Transverse colon (tissue), 4 donors: ENCODE measurements at regions of chr11 and their contacts with region 1.

Region 1: GRCh38 chr11:88174709-88175568 is at the start of gene RAB38:
- DNase-seq: peak; percentile 74
- H3K4me3 ChIP-seq: peak within 1 kb of the TSS; percentile 11 to 58 (median 36)
- H3K27ac ChIP-seq: peak within 1 kb of the TSS; percentile 17 to 73 (median 59)
- H3K4me1 ChIP-seq: peaks cover 0 to 21% (median 9%) of the 10 kb centered on the region in 4 donors
- H3K27me3 ChIP-seq: no peaks in the 10 kb centered on the region
- CTCF ChIP-seq: no peak
- EP300 ChIP-seq: no peak
- POLR2A ChIP-seq: no peak
- total RNA-seq, gene RAB38: 0.80 to 3.7 (median 1.6) TPM in 3 of 4 donors, not detected in the other

Region 2: DNA sequence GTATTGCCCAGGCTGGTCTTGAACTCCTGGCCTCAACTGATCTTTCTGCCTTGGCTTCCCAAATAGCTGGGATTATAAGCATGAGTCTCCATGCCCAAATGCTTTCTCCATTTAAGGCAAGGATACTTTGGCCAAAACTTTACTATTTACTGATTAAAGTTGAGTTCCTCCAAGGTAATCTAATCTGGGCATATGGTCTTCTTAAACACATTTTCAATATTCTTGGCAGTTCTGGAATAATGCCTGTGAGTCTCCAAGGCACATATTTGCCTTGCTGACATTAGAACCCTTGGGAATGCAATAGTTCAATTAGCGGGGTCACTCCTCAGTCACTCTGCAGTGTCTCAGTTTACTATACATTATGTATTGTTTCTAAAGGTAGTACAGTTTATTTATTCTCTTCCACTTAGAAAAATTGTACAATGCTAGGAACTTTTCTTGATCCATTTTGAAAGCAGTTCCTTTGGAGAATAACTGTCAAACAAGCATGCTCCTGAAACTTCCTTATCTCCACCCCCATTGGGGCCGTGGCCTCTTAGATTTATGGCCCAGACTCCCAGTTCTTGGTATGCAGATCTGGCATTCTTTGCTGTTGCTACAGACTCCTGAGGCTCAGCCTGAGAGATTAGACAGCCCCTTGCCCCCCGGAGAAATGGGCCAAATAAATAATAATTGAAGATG is 13.5 kb after region 1 on chr11:
- in situ Hi-C with region 1: no loop called
- intact Hi-C with region 1: loop called (anchors 1 kb)
- DNase-seq: no peak
- H3K4me3 ChIP-seq: no peak overlapping the region
- H3K27ac ChIP-seq: no peak overlapping the region
- H3K4me1 ChIP-seq: peaks cover 0 to 8% (median 0%) of the 10 kb centered on the region in 4 donors
- H3K27me3 ChIP-seq: no peaks in the 10 kb centered on the region
- CTCF ChIP-seq: no peak
- EP300 ChIP-seq: no peak
- POLR2A ChIP-seq: no peak